ENCODE measurements at regions of chr10 and their contacts with region 1.

Region 1: GRCh38 chr10:122980209-122981065 is at the start of gene PSTK:
- DNase-seq: peak; percentile 44
- H3K4me3 ChIP-seq: peak within 1 kb of the TSS; percentile 94
- H3K27me3 ChIP-seq: no peaks in the 10 kb centered on the region
- CTCF ChIP-seq: peak; percentile 96
- polyA plus RNA-seq, gene PSTK: 3.0 and 5.5 TPM in 2 replicates

Region 2: DNA sequence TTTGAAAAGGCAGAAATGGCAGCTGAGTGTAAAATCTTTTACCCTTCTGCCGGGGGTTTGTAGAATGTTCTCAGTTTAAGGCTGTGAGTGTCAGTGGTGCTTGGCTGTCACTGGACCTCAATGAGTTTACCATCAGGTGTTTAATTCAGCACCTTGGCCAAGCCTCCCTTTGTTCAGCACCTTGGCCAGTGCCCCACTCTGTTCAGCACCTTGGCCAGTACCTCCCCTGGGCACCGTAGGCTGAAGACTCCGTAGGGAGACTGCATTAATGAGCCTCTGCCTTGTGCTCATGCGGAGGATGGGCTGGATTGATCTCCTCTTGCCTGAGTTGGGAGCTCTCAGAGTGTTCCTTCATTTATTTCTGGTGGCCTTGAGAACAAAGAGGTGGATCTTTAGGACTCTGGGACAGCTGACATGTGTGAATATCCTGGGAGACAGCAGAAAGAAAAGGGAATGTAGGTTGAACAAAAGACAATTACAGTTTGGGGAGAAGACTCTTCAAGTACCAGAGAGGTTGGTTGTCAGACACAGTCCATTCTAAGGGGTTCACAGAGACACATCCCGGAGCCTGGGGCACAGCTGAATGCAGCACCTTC is 68.5 kb before region 1 on chr10:
- CTCF ChIA-PET with region 1: no interaction called
- POLR2A ChIA-PET with region 1: no interaction called
- DNase-seq: no peak
- H3K4me3 ChIP-seq: no peak overlapping the region
- H3K27me3 ChIP-seq: no peaks in the 10 kb centered on the region
- CTCF ChIP-seq: no peak

Region 3: DNA sequence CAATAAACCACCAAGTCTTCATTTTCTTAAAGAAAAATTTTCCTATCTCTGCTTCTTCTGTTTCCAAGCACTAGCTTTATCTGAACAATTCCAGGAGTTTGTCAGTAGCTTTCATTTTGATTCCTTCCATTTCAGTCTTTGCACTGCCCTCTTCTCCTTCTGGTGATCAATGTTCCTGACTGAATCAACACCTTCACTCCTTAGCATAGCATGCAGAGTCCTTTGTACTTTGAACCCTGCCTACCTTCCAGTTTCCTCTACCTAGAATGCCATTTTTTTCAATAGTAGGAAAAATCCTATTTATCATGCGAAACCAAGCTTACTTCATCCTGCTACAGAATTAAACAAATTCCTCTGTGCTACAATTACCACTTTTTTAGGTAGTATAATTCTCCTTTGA is 24.5 kb before region 1 on chr10:
- CTCF ChIA-PET with region 1: interaction called, 11 read pairs
- POLR2A ChIA-PET with region 1: no interaction called
- DNase-seq: no peak
- H3K4me3 ChIP-seq: no peak overlapping the region
- H3K27me3 ChIP-seq: no peaks in the 10 kb centered on the region
- CTCF ChIP-seq: no peak

Region 4: DNA sequence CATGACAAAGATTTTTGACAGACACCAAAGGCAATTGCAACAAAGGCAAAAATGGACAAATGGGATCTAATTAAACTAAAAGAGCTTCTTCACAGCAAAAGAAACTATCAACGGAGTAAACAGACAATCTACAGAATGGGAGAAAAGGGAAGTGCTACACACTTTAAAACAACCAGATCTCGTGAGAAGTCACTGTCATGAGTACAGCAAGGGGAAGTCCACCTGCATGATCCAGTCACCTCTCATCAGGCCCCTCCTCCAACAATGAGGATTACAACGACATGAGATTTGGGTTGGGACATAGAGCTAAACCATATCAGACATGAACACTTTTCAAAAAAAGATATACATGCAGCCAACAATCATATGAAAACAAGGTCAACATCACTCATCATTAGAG is 11.7 kb before region 1 on chr10:
- CTCF ChIA-PET with region 1: interaction called, 17 read pairs
- POLR2A ChIA-PET with region 1: no interaction called
- DNase-seq: no peak
- H3K4me3 ChIP-seq: no peak overlapping the region
- H3K27me3 ChIP-seq: no peaks in the 10 kb centered on the region; the same call in 1 of the 2 replicates
- CTCF ChIP-seq: no peak